GM13977 (cell line): ENCODE measurements at regions of chr4 and their contacts with region 1.

Region 1: DNA sequence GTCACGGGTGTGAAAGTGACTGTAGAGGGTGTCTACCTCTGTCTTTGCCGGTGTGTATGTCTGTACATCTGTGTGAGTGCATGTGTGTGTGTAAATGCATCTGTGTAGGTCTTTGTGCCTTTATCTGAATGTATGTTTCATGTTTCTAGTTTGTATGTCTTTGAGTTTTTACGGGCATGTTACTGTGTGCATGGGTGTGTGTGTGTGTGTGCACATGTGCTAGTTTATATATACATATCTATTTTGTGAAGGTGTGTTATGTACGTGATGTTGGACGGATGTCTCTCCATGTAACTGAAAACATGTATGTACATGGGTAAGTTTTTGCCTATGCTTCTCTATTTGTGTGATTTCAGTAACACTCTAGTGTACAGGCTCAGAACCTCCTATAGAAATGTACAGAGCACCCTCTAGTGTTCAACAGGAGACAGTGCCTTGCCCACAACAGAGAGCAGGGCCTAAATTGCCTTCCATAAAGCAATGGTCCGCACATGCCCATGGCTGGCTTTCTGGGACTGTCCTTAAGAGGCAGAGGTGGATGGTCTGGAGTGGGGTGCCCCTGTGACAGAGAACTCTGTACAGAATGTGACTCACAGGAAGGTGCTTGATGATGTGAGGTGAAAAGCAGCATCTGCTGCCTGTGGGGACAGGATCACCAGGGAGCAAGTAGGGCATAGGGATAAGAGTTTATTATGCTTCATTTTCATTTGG is 343.5 kb downstream of the RAPGEF2 start:
- DNase-seq: peak; percentile 54
- CTCF ChIP-seq: peak; percentile 83

Region 2: DNA sequence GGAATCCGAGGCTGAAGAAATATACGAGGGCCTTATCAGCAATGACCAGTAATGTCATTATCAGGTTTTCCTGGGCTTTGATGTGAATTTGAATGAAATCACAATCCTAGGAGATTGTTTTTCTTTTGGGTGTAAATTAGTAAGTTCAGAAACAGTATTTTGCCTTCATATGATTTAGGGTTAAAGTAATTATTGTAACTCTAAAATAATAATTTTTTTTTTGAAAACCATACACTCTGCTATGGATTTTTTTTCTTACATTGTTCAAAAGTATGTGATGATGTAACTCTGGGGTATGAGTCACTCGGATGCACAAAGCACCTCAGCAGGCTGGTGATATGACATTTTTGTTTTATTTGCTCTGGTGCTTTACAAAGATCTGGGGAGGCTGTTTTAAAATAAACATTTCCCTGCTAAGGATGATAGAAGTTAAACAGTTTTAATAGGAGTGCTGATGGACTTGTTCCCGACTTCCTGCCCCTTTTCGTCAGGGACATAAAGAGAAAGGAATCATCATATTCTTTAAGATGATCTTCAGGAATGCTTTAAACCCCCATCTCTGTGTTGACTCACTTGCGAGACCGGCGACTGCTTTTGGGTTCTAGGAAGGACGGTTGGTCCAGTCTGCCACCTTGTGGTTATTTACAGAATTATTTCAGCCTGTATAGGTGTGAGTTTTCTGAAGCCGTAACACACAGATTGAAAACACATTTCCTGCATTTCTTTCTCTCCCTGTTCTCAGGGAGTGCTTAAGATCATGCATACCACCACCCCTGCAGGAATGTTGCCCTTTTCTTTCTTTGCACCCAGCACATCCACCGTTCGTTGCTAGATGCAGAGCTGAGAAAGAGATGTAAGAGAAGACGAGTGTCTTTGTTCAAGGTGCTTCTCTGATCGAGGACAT is 271.1 kb before region 1 on chr4:
- in situ Hi-C with region 1: loop called (anchors 25 kb)
- DNase-seq: no peak
- CTCF ChIP-seq: peak; percentile 72